ENCODE measurements at regions of chr17 and their contacts with region 1.

Region 1: GRCh38 chr17:31842183-31843069 is 16.6 kb downstream of the COPRS start:
- DNase-seq: peak; percentile 74 to 83 (median 78)
- ATAC-seq: peak; percentile 95
- H3K4me3 ChIP-seq: no peak overlapping the region
- H3K27ac ChIP-seq: no peak overlapping the region
- H3K4me1 ChIP-seq: no peaks in the 10 kb centered on the region; a peak in 1 of 5 replicates
- H3K27me3 ChIP-seq: peaks cover 3 to 21% of the 10 kb centered on the region in 2 experiments; a peak in 3 of 5 replicates
- CTCF ChIP-seq: peak; percentile 84 to 93 (median 92)
- EP300 ChIP-seq: no peak
- POLR2A ChIP-seq: no peak
- RAD21 ChIP-seq: peak; percentile 90 to 94

Region 2: GRCh38 chr17:31433091-31433790 is 409.2 kb before region 1 on chr17:
- CTCF ChIA-PET with region 1: interaction called, 4 read pairs
- POLR2A ChIA-PET with region 1: interaction called, 3 read pairs
- in situ Hi-C with region 1: loop called (anchors 10 kb)
- intact Hi-C with region 1: loop called (anchors 2 kb)
- DNase-seq: no peak
- ATAC-seq: 0 out of 3 replicates have a peak, but pooled peaks have one; percentile 11
- H3K4me3 ChIP-seq: no peak overlapping the region
- H3K27ac ChIP-seq: no peak overlapping the region
- H3K4me1 ChIP-seq: peaks cover 0 to 16% of the 10 kb centered on the region in 2 experiments; a peak in 2 of 5 replicates
- H3K27me3 ChIP-seq: peaks cover 35 to 61% of the 10 kb centered on the region in 2 experiments
- CTCF ChIP-seq: no peak
- EP300 ChIP-seq: no peak
- POLR2A ChIP-seq: no peak
- RAD21 ChIP-seq: no peak

Region 3: DNA sequence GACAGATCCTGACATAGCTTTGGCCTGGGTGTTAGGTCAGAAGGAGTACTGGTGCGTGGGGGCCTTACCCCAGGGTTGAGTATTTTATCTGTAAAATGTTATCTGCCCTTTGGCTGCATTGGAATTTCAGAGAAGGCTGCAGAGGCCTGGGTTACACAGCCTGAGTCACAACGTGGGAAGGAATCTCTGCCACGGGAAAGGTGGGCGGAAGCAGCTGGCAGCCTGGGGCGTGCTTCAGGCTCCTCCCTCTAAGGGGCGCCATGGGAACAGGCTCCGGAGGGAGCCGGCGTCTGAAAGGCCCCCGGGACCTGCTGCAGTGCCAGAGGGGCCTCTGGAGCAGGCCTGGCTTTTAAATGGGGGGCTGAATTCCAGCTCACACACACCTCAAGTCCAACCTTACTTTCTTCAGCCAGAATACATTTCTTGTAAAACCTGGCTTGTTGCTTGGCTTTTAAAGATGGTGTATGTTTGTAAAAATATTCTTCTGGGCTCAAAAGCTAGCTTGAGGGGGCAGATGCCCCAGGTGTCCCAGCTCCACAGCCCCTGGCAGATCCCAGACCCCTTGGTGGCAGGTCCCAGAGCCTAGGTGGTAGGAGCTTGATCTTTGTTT is 308.8 kb before region 1 on chr17:
- CTCF ChIA-PET with region 1: interaction called, 7 read pairs
- POLR2A ChIA-PET with region 1: no interaction called
- in situ Hi-C with region 1: no loop called
- intact Hi-C with region 1: loop called (anchors 5 kb)
- DNase-seq: peak; percentile 59 to 76 (median 70)
- ATAC-seq: peak; percentile 83
- H3K4me3 ChIP-seq: no peak overlapping the region
- H3K27ac ChIP-seq: no peak overlapping the region
- H3K4me1 ChIP-seq: peaks cover 0 to 8% of the 10 kb centered on the region in 2 experiments; a peak in 1 of 5 replicates
- H3K27me3 ChIP-seq: peaks cover 0 to 16% of the 10 kb centered on the region in 2 experiments; a peak in 2 of 5 replicates
- CTCF ChIP-seq: peak; percentile 55 to 63 (median 60)
- EP300 ChIP-seq: no peak
- POLR2A ChIP-seq: no peak
- RAD21 ChIP-seq: peak; percentile 31 to 67; a peak in 3 of 4 replicates

Region 4: GRCh38 chr17:31549525-31550388 is 292.7 kb before region 1 on chr17:
- CTCF ChIA-PET with region 1: no interaction called
- POLR2A ChIA-PET with region 1: no interaction called
- in situ Hi-C with region 1: loop called (anchors 5 kb)
- intact Hi-C with region 1: no loop called
- DNase-seq: peak; percentile 94 to 96 (median 94)
- ATAC-seq: peak; percentile 91
- H3K4me3 ChIP-seq: peak overlapping the region; percentile 97
- H3K27ac ChIP-seq: peak overlapping the region; percentile 94
- H3K4me1 ChIP-seq: peaks cover 3 to 9% of the 10 kb centered on the region in 2 experiments; a peak in 4 of 5 replicates
- H3K27me3 ChIP-seq: peaks cover 7 to 9% of the 10 kb centered on the region in 2 experiments; a peak in 4 of 5 replicates
- CTCF ChIP-seq: no peak
- EP300 ChIP-seq: peak; percentile 66
- POLR2A ChIP-seq: peak; percentile 91
- RAD21 ChIP-seq: no peak

Region 5: DNA sequence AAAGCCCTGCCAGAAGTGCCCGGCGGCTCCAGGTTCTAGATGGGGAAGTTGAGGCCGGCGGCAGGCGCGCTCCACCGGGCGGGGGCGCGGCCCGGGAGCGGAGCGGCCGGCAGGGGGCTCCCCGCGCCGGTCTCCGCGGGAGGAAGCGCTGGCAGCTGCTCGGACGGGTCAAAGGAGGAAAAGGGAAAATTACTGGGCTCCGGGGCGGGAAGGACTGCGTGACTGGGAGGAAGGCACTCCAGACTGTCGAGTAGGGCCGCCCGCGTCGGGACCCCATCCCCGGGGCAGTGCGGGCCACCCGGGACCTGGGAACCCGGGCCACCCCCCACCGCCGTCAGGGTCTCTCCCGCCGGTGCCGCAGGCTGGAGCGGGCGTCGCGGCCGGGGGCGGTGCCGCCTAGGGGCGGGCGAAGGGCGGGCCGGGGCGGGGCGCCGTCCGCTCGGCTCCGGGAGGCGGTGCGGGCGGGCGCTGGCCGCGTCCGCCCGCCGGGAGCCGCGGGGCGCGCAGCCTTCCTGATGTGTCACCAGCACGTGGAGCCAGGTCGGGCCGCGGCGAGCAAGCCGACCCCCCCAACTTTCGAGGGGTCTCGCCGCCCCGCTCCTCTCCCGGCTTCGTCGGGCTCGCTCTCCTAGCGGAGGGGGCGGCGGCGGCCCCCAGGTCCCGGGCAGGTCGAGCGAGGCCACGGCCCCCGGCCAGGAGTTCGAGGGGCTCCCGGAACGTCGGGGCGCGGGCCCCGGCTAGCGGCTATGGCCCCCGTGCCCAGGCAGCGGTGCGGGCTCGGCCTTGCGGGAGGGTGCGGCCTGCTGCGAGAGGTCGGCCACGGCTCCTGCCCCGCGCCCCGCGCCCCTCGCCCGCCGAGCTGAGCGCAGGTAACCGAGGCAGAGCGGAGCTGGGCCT is 283.4 kb before region 1 on chr17:
- CTCF ChIA-PET with region 1: interaction called, 27 read pairs
- POLR2A ChIA-PET with region 1: interaction called, 3 read pairs
- in situ Hi-C with region 1: loop called (anchors 5 kb)
- intact Hi-C with region 1: no loop called
- DNase-seq: peak; percentile 76 to 95 (median 93)
- ATAC-seq: peak; percentile 98
- H3K4me3 ChIP-seq: peak overlapping the region; percentile 64
- H3K27ac ChIP-seq: peak overlapping the region; percentile 51; the same call in 2 of the 3 replicates
- H3K4me1 ChIP-seq: peaks cover 0 to 28% of the 10 kb centered on the region in 2 experiments; a peak in 2 of 5 replicates
- H3K27me3 ChIP-seq: peaks cover 0 to 17% of the 10 kb centered on the region in 2 experiments; a peak in 2 of 5 replicates
- CTCF ChIP-seq: peak; percentile 67 to 97 (median 80); a peak in 5 of 6 replicates
- EP300 ChIP-seq: no peak
- POLR2A ChIP-seq: peak; percentile 54; the same call in 1 of the 2 replicates
- RAD21 ChIP-seq: peak; percentile 77 to 86

Region 6: GRCh38 chr17:31919802-31920525 is 77.5 kb after region 1 on chr17:
- CTCF ChIA-PET with region 1: no interaction called
- POLR2A ChIA-PET with region 1: no interaction called
- in situ Hi-C with region 1: no loop called
- intact Hi-C with region 1: no loop called
- DNase-seq: no peak
- ATAC-seq: no peak
- H3K4me3 ChIP-seq: no peak overlapping the region
- H3K27ac ChIP-seq: no peak overlapping the region
- H3K4me1 ChIP-seq: peaks cover 0 to 4% of the 10 kb centered on the region in 2 experiments; a peak in 2 of 5 replicates
- H3K27me3 ChIP-seq: no peaks in the 10 kb centered on the region
- CTCF ChIP-seq: no peak
- EP300 ChIP-seq: no peak
- POLR2A ChIP-seq: no peak
- RAD21 ChIP-seq: no peak

Measured in K562 (cell line).